ENCODE measurements at regions of chr6 and their contacts with region 1.

Region 1: DNA sequence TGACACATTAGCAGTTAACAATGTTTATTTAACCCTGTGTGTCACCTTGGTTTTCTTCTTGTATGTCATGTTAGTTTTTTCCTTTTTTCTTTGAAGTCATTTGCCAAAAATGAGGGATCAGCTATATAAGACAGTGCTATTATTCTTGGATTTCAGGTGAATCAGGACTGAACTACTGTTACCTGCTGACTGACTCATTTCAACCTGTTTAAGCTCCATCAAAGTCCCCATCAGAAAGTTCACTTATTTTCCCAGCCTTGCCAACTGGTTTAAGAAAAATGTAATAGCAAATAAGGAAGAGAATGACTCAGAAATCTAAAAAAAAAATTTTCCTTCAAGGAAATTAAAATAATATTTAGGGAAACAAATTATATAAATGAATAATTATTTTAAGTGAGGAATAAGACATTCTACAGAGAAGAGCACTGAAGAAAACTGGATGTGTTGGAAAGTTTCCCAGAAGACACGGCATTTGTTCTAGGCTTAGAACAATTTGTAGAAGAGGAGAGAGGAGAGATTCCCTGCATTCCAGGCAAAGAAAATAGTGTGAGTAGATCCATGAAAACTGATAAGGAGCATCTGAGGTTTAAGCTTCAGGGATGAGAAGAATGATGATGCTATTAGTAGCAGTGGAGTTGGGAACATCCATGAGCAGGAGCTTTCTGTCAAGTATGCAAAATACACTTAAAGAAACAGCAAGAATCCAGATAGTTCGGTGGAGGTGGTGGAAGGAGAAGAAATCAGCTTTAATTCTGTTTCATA is 84.9 kb upstream of the SIM1 start:
- DNase-seq: no peak
- H3K4me3 Mint-ChIP-seq: no peak overlapping the region
- H3K27ac Mint-ChIP-seq: no peak overlapping the region
- H3K4me1 Mint-ChIP-seq: peaks cover 37% of the 10 kb centered on the region
- H3K27me3 Mint-ChIP-seq: no peaks in the 10 kb centered on the region
- CTCF ChIP-seq: no peak

Region 2: DNA sequence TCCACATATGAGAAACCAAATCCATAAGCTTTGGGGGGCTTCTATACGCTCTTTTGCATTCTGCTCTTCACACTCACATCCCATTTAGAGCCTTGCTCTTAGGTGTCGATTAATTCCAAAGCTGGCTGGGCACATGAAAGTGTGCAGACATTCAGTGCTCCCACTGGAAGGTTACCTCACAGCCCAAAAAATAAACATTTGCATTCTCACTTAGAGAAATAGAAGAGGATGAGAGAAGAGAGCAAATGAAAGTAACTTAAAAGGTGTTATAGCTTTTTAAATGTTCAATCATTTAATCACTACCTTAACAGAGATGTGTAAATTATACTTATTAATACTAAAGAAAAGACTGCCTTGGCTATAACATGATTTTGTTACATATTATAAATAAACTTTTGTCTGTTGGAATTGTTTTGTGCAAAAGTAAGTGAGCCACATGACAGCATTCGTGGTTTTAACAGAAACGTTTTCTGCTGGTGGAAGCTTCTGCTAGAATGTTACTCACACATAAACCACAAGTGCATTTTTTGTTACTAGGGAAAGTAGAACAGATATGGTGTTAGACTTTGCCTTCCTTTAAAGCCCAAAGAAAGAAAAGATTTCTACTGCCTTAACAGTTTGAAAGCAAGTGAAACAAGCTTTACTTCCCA is 201.6 kb before region 1 on chr6:
- CTCF ChIA-PET with region 1: no interaction called
- intact Hi-C with region 1: loop called (anchors 10 kb)
- DNase-seq: no peak
- H3K4me3 Mint-ChIP-seq: no peak overlapping the region
- H3K27ac Mint-ChIP-seq: peak overlapping the region; percentile 54
- H3K4me1 Mint-ChIP-seq: peaks cover 35% of the 10 kb centered on the region
- H3K27me3 Mint-ChIP-seq: no peaks in the 10 kb centered on the region
- CTCF ChIP-seq: no peak

Region 3: DNA sequence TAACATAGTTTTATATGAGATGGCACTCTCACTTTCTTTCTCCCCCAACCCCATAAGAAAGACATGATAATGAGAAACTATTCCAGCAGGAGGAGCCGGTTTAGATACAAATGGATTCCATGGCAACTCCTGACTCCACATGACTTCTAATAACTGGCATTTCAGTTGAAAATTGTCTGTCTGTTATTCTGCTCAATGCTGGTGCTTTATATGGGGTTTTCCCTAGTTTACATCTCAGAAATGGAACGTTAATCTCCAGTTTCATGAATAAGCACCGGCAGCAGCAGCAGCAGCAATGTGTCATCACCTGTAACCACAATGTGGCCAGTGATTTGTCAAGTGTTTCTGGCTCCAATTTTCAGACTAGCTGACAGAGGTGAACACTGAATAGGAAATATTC is 76.9 kb before region 1 on chr6:
- CTCF ChIA-PET with region 1: no interaction called
- intact Hi-C with region 1: no loop called
- DNase-seq: peak; percentile 34
- H3K4me3 Mint-ChIP-seq: no peak overlapping the region
- H3K27ac Mint-ChIP-seq: no peak overlapping the region
- H3K4me1 Mint-ChIP-seq: peaks cover 21% of the 10 kb centered on the region
- H3K27me3 Mint-ChIP-seq: no peaks in the 10 kb centered on the region
- CTCF ChIP-seq: no peak

Region 4: DNA sequence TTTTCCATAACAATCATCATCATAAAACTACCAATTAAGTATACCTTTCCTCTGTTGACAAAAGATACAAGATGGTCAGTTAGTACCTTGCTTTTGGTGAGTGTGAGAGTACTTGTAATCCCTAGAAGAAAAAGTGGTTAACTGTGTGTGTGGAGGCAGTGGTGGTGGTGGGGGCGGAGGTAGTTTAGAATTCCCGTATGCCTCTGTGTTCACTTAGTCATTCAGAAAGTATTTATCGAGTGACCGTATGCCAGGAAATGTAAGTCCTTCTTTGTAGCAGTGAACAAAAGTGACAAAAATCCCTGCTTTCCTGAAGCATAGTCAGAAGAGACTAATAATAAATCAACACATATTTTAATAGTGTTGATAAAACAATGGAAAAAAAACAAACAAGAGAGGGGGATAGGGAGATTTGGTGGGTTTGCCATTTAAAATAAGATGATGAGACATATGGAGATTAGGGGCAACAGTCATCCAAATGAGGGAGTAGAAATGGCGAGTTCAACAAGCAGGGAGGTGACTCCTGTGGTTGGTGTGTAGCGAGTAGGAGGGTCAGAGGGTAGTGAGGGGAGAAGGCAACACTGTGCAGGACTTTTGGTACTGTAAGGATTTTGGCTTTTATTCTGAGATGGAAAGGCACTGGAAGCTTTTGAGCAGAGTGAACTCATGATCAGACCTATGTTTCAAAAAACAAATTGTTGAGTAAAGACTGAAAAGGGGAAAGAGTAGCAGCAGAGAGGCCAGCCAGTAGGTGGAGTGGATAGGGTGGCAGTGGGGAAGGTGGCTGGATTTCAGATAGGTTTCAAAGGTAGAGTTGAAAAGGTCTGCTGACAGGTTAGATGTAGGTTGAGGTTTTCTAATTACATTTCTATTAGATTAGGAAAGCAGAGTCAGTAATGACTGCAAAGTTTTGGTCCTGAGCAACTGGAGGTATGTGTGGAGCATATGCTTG is 44.5 kb before region 1 on chr6:
- CTCF ChIA-PET with region 1: no interaction called
- intact Hi-C with region 1: loop called (anchors 5 kb)
- DNase-seq: peak; percentile 64
- H3K4me3 Mint-ChIP-seq: no peak overlapping the region
- H3K27ac Mint-ChIP-seq: no peak overlapping the region
- H3K4me1 Mint-ChIP-seq: peaks cover 12% of the 10 kb centered on the region
- H3K27me3 Mint-ChIP-seq: no peaks in the 10 kb centered on the region
- CTCF ChIP-seq: no peak

Measured in Calu3 (cell line).